ENCODE measurements at regions of chr2 and their contacts with region 1.

Region 1: DNA sequence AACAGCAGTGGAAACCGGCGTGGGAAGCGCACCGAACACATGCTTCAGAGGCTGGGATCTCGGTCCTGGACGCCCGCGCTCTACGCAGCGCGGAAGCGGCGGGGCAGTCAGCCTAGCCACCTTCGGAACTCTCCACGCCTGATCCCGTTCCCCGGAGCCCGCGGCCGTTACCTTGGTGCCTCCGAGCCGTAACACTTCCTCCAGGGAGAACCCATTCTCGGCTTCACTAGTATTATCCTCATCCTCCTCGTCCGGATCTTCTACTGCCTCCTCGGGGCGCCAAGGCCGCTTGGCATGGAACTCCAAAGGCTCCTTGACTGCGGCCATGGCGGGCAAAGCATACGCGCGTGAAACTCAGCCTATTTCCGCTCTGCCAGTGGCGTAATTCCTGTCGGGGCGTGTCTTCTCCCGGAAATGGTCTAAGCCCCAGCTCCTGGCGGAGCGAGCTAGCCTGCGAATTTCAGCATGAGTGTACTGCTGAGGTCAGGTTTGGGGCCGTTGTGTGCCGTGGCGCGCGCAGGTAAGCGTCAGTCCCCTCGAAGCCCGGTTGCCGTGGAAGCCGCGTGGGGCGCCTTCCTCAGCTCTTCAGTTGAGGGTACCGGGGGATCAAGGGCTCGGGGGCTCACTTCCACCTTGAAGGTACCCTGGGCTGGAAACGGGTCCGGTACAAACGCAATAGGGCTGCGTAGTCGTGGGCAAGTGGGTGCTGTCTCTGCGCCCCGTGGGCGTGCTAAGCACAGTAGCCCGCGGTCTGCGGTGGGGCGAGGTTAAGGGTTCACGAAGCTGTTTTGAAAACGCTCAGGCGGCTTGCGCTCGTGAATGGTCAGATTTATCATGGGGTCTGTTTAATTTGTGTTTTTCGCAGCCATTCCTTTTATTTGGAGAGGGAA is at the starts of genes CEBPZ and NDUFAF7:
- DNase-seq: peak; percentile 91 to 92
- H3K4me3 ChIP-seq: peak within 1 kb of the TSS; percentile 98
- H3K4me3 Mint-ChIP-seq: no peak within 1 kb of the TSS
- H3K27ac Mint-ChIP-seq: no peak within 1 kb of the TSS
- H3K4me1 ChIP-seq: peaks cover 11% of the 10 kb centered on the region
- H3K4me1 Mint-ChIP-seq: peaks cover 7% of the 10 kb centered on the region
- H3K27me3 ChIP-seq: no peaks in the 10 kb centered on the region
- H3K27me3 Mint-ChIP-seq: no peaks in the 10 kb centered on the region
- CTCF ChIP-seq: no peak
- total RNA-seq, gene CEBPZ: 93.3 and 95.4 TPM in 2 replicates
- total RNA-seq, gene NDUFAF7: 34.3 and 38.0 TPM in 2 replicates

Region 2: DNA sequence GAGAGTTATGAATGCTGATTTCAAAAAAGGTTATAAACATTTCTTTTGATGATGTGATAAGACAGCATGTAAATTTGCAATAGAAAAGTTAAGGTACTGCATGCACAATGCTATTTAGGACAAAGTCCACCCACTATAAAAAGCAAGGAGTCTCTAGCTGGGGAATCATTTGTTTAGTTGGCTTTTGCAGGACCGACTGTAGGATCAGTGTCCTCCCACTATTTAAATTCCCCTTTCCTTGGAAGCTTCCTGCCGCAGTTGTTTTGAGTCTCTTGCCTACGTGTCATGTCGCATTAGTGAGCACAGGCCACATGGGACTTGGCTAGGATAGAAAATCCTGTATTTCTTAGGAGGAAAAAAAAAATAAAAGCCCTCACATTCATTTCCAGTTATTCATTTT is 126.0 kb after region 1 on chr2:
- CTCF ChIA-PET with region 1: no interaction called
- POLR2A ChIA-PET with region 1: interaction called, 10 read pairs
- intact Hi-C with region 1: no loop called
- DNase-seq: no peak
- H3K4me3 ChIP-seq: no peak overlapping the region
- H3K4me3 Mint-ChIP-seq: no peak overlapping the region
- H3K27ac Mint-ChIP-seq: no peak overlapping the region
- H3K4me1 ChIP-seq: no peaks in the 10 kb centered on the region
- H3K4me1 Mint-ChIP-seq: no peaks in the 10 kb centered on the region
- H3K27me3 ChIP-seq: no peaks in the 10 kb centered on the region
- H3K27me3 Mint-ChIP-seq: no peaks in the 10 kb centered on the region
- CTCF ChIP-seq: no peak

Region 3: GRCh38 chr2:37648331-37649011 is 417.0 kb after region 1 on chr2:
- CTCF ChIA-PET with region 1: no interaction called
- POLR2A ChIA-PET with region 1: no interaction called
- intact Hi-C with region 1: no loop called
- DNase-seq: no peak
- H3K4me3 ChIP-seq: no peak overlapping the region
- H3K4me3 Mint-ChIP-seq: no peak overlapping the region
- H3K27ac Mint-ChIP-seq: no peak overlapping the region
- H3K4me1 ChIP-seq: peaks cover 27% of the 10 kb centered on the region
- H3K4me1 Mint-ChIP-seq: peaks cover 60% of the 10 kb centered on the region
- H3K27me3 ChIP-seq: no peaks in the 10 kb centered on the region
- H3K27me3 Mint-ChIP-seq: no peaks in the 10 kb centered on the region
- CTCF ChIP-seq: peak in 1 of 2 experiments; percentile 19